ENCODE measurements at regions of chr20 and their contacts with region 1.

Region 1: DNA sequence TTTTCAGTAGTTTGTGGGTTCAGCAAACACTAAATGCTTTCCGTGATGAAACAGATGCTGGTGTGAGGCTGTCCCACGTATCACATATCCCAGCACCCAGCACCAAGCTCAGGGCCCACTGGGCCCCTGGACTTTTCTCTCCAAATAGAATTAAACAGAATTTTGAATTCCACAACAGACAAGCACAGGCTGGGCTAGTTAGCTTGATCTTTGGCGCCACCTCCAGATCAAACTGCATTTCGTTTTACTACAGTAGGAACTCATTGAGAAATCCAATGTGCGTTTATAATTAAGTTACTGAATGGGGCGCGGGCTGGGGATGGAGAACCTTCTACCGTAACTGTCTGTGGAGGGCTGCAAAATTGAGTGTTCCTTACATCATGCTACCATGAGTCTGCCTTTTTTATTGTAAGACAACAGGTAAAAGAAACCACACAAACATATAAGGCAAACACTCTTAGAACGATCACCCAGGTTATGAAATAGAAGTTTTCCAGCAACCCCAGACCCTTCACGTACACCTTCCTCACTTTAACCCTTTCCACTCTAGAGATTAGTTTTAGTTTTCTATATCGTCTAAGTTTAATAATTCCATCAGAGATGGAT is 107.8 kb downstream of the ZFP64 start:
- DNase-seq: no peak
- ATAC-seq: no peak
- H3K4me3 ChIP-seq: no peak overlapping the region
- H3K27ac ChIP-seq: no peak overlapping the region
- H3K4me1 ChIP-seq: no peaks in the 10 kb centered on the region
- H3K27me3 ChIP-seq: no peaks in the 10 kb centered on the region
- CTCF ChIP-seq: peak in 3 of 5 experiments; percentile 4 to 43 (median 18)
- POLR2A ChIP-seq: no peak

Region 2: DNA sequence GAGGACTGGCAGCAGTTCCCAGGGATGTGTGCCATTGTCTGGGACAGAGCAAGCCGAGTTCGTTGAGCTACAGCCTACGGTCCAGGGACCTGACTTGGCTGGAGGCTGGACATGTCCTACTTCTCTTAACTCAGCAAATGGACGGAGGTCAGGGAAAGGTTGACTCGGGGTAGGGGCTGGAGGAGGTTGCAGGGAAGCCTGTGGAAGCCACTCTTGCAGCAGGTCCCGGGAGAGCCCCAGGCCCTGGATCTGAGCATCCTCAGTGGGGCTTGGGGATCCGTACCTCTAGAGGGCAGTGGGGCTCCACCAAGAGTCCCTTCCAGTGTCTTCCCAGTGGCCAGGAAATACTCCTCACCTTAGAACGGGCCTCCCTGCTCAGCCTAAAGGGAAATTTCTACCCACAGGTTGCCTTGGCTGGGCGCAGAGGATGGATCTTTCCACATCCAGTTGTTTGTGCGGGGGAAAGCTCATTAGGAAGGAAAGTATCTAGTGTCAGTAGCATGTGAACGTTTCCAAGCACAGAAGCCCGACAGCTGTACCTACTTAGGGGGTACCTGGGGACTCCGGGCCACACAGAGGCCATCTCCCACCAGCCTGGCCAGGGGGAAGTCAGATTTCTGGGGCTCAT is 711.4 kb before region 1 on chr20:
- in situ Hi-C with region 1: loop called in 1 of 4 experiments (anchors 25 kb)
- intact Hi-C with region 1: no loop called
- DNase-seq: peak; percentile 42
- ATAC-seq: peak; percentile 94 to 97
- H3K4me3 ChIP-seq: no peak overlapping the region
- H3K27ac ChIP-seq: no peak overlapping the region
- H3K4me1 ChIP-seq: no peaks in the 10 kb centered on the region
- H3K27me3 ChIP-seq: no peaks in the 10 kb centered on the region
- CTCF ChIP-seq: peak; percentile 74 to 90 (median 87)
- POLR2A ChIP-seq: no peak

Region 3: DNA sequence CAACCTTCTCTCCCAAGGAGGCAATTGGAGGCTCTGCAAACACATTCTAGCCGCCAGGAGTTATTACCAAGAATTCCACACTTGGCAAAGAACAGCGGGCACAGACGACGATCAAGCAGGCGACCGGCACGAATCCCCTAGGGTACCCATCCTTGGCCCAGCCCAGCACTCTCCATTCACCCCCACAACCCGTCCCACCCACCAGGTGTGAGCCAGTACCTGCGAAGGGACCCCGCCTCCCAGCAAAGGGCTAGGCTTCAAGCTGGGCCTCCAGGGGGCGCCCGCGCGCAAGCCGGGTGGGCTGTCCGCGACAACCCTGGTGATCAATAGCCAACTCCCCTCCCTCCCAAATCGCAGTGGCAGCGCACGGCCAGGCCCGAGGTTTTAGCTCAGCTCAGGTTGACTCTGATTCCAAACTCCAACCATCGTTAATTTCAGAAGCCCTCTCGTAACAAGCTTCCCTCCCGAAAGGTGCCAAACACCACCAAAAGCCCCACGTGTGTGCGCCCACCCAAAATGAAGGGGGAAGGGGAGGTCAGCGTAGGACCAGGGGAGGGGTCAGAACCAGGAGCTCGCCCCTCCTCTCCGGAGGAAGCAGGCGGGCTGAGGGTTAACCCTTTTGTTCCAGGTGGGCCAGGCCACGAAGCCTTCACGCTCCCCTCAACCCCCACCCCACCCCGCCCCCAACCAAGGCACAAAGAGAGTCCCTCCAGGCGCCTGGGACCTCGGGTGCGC is 283.5 kb before region 1 on chr20:
- in situ Hi-C with region 1: no loop called
- intact Hi-C with region 1: loop called (anchors 10 kb)
- DNase-seq: no peak
- ATAC-seq: no peak
- H3K4me3 ChIP-seq: peak overlapping the region; percentile 25 to 50 (median 34)
- H3K27ac ChIP-seq: no peak overlapping the region
- H3K4me1 ChIP-seq: peaks cover 9 to 14% of the 10 kb centered on the region in 2 donors
- H3K27me3 ChIP-seq: peaks cover 43 to 52% (median 47%) of the 10 kb centered on the region in 3 donors
- CTCF ChIP-seq: peak in 4 of 5 experiments; percentile 32 to 65 (median 54)
- POLR2A ChIP-seq: no peak